Activated CD4-positive, alpha-beta T cell treated with anti-CD3 and anti-CD28 coated beads, Interleukin-2, amount 10 ng/mL, durations not matched to agents 24 days and 14 days (primary cell): ENCODE measurements at regions of chr6 and their contacts with region 1.

Region 1: GRCh38 chr6:26439657-26440056 is 647 bp upstream of the BTN3A3 start:
- DNase-seq: peak; percentile 61
- H3K4me3 Mint-ChIP-seq: peak overlapping the region; percentile 93
- H3K27ac Mint-ChIP-seq: peak overlapping the region; percentile 93
- H3K4me1 Mint-ChIP-seq: peaks cover 38% of the 10 kb centered on the region
- H3K27me3 Mint-ChIP-seq: no peaks in the 10 kb centered on the region

Region 2: DNA sequence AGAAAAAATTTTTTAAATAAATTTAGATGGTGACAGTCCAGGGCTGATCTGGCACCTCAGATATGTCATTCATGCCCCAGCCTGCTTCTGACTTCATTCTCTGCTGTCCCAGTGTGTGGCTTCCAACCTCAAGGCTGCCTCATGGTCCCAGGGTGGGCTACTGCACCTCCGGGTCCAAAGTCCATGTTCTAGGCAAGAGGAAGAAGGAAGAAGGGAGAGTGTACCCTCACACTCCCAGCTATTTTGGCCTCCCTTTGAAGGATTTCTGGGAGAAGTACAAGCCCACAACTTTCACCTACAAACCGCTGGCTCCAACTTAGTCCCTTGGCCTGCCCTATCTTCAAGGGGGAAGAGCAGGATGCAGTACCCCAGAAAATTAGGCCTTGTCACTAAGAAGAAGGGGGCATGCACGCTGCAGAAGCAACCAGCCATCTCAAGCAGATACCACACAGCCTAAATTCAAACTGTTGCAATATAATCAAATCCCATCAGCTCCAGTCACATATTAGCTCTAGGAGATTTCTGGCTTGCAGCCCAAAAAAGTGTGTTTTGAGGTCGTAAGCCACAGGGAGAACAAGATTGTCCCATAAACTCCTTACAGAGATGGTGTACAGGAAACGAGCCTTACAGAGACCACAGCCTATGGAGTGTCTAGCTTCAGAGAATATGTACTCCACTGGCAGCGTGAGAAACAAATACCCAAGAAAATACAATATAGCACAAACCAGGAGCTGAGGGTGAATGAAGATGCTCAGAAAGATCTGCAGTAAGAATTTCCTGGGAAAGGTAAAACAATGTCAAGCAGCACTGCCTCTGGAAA is 75.6 kb before region 1 on chr6:
- intact Hi-C with region 1: loop called (anchors 2 kb)
- DNase-seq: peak; percentile 75
- H3K4me3 Mint-ChIP-seq: no peak overlapping the region
- H3K27ac Mint-ChIP-seq: no peak overlapping the region
- H3K4me1 Mint-ChIP-seq: peaks cover 41% of the 10 kb centered on the region
- H3K27me3 Mint-ChIP-seq: no peaks in the 10 kb centered on the region

Region 3: GRCh38 chr6:26421259-26422144 is 18.2 kb before region 1 on chr6:
- intact Hi-C with region 1: loop called (anchors 2 kb)
- DNase-seq: peak; percentile 85
- H3K4me3 Mint-ChIP-seq: no peak overlapping the region
- H3K27ac Mint-ChIP-seq: no peak overlapping the region
- H3K4me1 Mint-ChIP-seq: peaks cover 10% of the 10 kb centered on the region
- H3K27me3 Mint-ChIP-seq: peaks cover 2% of the 10 kb centered on the region

Region 4: GRCh38 chr6:26457806-26458688 is 18.4 kb after region 1 on chr6 and contains the start of gene BTN2A1:
- intact Hi-C with region 1: loop called (anchors 2 kb)
- DNase-seq: peak; percentile 92
- H3K4me3 Mint-ChIP-seq: peak within 1 kb of the TSS; percentile 95
- H3K27ac Mint-ChIP-seq: peak within 1 kb of the TSS; percentile 94
- H3K4me1 Mint-ChIP-seq: peaks cover 48% of the 10 kb centered on the region
- H3K27me3 Mint-ChIP-seq: no peaks in the 10 kb centered on the region
- total RNA-seq, gene BTN2A1: 16.5 and 19.8 TPM in 2 replicates

Region 5: DNA sequence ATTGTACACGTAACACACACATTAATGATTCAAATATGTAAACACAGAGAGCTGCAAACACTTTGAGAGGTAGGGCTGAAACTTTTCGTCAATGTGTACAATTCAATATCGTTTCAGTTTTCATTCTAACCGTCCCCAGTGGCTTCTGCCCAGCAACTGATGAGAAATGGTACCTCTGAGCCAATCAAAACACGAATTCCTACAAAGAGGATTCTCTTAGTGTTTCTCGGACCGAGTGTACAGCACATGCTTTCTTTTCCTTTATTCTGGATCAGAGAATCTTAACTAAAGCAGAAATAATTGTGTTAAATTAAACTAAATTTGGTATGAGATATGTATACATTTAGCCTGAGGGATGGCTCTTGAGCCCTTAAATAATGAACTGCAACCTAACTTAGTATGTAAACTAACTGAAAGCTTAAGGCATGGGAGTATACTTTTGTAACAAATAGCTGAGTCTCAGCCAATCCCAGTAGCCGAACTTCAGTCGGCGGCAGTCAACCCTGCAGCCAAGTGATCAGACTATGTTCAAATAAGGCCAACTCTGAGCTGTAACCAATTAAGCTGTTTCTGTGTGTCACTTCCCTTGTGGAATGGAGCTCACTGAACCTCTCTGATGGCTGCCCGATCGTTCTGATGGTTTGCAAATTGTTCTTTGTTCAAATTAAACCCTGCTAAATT is 34.2 kb after region 1 on chr6:
- intact Hi-C with region 1: loop called (anchors 1 kb)
- DNase-seq: peak; percentile 95
- H3K4me3 Mint-ChIP-seq: peak overlapping the region; percentile 96
- H3K27ac Mint-ChIP-seq: peak overlapping the region; percentile 100
- H3K4me1 Mint-ChIP-seq: peaks cover 30% of the 10 kb centered on the region
- H3K27me3 Mint-ChIP-seq: no peaks in the 10 kb centered on the region

Region 6: DNA sequence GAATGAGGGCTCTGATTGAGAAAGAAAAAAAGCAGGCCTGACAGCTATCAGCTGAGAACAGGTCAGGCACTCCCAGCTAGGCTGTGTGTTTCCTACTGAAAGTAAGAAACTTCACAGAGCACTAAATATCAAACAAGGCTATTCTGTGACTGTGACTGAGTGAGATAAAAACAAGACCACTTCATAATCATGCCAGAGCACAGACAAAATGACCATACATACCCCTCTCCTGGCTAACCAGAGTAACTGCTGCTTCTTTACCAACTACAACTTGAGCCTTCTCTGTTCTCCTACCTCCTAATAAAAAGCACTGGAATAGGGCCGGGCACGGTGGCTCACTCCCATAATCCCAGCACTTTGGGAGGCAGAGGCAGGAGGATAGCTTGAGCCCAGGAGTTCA is 53.6 kb after region 1 on chr6:
- intact Hi-C with region 1: loop called (anchors 5 kb)
- DNase-seq: no peak
- H3K4me3 Mint-ChIP-seq: no peak overlapping the region
- H3K27ac Mint-ChIP-seq: peak overlapping the region; percentile 25
- H3K4me1 Mint-ChIP-seq: peaks cover 24% of the 10 kb centered on the region
- H3K27me3 Mint-ChIP-seq: no peaks in the 10 kb centered on the region